GM12878 (cell line): ENCODE measurements at regions of chr7 and their contacts with region 1.

Region 1: DNA sequence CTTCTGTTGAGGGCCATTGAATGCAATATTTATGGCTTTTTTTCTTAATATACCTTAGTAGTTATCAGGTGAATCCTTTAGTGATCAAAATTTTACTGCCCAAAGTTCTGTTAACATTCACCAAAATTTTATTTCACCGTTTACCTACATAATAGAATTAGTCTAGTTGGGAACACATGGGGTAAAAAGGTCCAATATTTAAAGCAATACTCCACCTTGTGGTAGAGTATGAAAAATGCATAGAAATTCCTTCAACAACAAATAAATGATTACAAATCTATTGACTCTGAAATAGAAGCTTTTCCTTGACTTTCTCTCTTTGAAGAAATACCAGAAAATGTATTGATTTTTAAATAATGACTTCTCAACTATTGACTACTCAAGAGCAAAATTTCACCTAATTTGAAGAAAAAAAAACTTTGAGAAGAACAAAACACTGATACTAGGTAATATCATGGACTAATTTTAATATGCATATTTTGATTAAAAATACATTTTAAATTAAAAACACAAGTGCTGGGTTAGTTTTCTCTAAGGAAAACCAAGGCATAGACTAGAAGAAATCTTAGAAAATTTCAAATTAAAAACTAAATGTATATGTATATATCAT is 43.3 kb downstream of the POLR1F start:
- DNase-seq: no peak
- ATAC-seq: peak; percentile 77
- H3K4me3 ChIP-seq: no peak overlapping the region
- H3K27ac ChIP-seq: no peak overlapping the region
- H3K4me1 ChIP-seq: no peaks in the 10 kb centered on the region
- H3K27me3 ChIP-seq: no peaks in the 10 kb centered on the region
- CTCF ChIP-seq: peak; percentile 38 to 68 (median 49); a peak in 3 of 6 replicates
- EP300 ChIP-seq: no peak
- POLR2A ChIP-seq: no peak
- RAD21 ChIP-seq: peak; percentile 64

Region 2: DNA sequence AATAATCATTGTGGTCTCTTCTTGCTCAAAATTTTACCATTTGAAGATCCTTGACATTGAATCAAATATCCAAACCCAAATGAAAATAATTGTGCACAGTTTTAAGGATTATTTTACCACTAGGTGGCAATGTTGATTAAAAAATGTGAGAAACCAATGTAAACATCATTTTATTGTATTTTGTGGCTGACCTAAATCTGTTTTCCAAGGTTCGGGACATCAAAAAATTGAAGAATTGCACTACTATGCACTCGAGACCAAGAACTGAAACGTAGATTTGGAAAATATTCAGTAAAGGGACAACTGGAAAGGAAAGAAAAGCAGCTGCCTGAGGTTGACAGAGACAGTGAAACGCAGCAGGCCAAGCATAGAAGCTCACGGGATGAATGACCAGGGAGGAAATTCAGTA is 1984.6 kb before region 1 on chr7:
- CTCF ChIA-PET with region 1: no interaction called
- POLR2A ChIA-PET with region 1: no interaction called
- RAD21 ChIA-PET with region 1: no interaction called
- SMC1A ChIA-PET with region 1: no interaction called
- in situ Hi-C with region 1: loop called (anchors 25 kb)
- intact Hi-C with region 1: no loop called
- DNase-seq: no peak
- ATAC-seq: peak; percentile 64; the same call in 2 of the 3 replicates
- H3K4me3 ChIP-seq: no peak overlapping the region
- H3K27ac ChIP-seq: no peak overlapping the region
- H3K4me1 ChIP-seq: no peaks in the 10 kb centered on the region
- H3K27me3 ChIP-seq: 0 out of 4 replicates have a peak, but pooled peaks cover 0 to 4% of the 10 kb centered on the region in 2 experiments
- CTCF ChIP-seq: peak in 2 of 3 experiments; percentile 40 to 44; a peak in 4 of 6 replicates
- EP300 ChIP-seq: no peak
- POLR2A ChIP-seq: no peak
- RAD21 ChIP-seq: peak; percentile 45

Region 3: GRCh38 chr7:18590744-18591340 is 1074.7 kb before region 1 on chr7:
- CTCF ChIA-PET with region 1: no interaction called
- POLR2A ChIA-PET with region 1: no interaction called
- RAD21 ChIA-PET with region 1: no interaction called
- SMC1A ChIA-PET with region 1: no interaction called
- in situ Hi-C with region 1: no loop called
- intact Hi-C with region 1: loop called (anchors 10 kb)
- DNase-seq: no peak
- ATAC-seq: peak; percentile 69
- H3K4me3 ChIP-seq: no peak overlapping the region
- H3K27ac ChIP-seq: no peak overlapping the region
- H3K4me1 ChIP-seq: no peaks in the 10 kb centered on the region
- H3K27me3 ChIP-seq: no peaks in the 10 kb centered on the region
- CTCF ChIP-seq: peak; percentile 22 to 39 (median 30); a peak in 3 of 6 replicates
- EP300 ChIP-seq: no peak
- POLR2A ChIP-seq: no peak
- RAD21 ChIP-seq: peak; percentile 53

Region 4: GRCh38 chr7:19117091-19117869 is 548.2 kb before region 1 on chr7 and contains the start of gene TWIST1:
- CTCF ChIA-PET with region 1: interaction called, 3 read pairs
- POLR2A ChIA-PET with region 1: no interaction called
- RAD21 ChIA-PET with region 1: interaction called, 3 read pairs
- SMC1A ChIA-PET with region 1: interaction called, 3 read pairs
- in situ Hi-C with region 1: loop called (anchors 25 kb)
- intact Hi-C with region 1: loop called (anchors 5 kb)
- DNase-seq: no peak
- ATAC-seq: 0 out of 3 replicates have a peak, but pooled peaks have one; percentile 20
- H3K4me3 ChIP-seq: no peak within 1 kb of the TSS
- H3K27ac ChIP-seq: no peak within 1 kb of the TSS
- H3K4me1 ChIP-seq: no peaks in the 10 kb centered on the region
- H3K27me3 ChIP-seq: peaks cover 7 to 21% of the 10 kb centered on the region in 2 experiments
- CTCF ChIP-seq: no peak
- EP300 ChIP-seq: no peak
- POLR2A ChIP-seq: no peak
- RAD21 ChIP-seq: no peak
- polyA plus RNA-seq, gene TWIST1: not detected

Region 5: DNA sequence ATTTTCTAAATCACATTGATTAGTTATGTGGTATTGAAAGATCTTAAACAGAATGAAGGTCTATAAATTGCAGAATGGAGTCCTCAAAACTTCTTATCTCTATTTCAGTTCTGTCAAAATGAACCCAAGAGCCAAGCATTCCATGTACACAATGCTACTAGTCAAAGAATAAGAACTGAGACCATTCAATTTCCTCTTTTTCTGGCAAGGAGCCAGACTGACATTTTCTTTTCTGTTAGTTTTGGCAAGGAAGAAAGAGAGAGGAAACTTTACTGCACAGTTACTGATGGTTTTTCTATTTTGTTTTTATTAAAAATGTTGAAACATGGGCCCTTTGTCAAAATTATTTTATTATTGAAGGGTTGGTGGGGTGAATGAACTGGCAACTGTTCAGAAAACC is 338.5 kb before region 1 on chr7:
- CTCF ChIA-PET with region 1: no interaction called
- POLR2A ChIA-PET with region 1: no interaction called
- RAD21 ChIA-PET with region 1: no interaction called
- SMC1A ChIA-PET with region 1: no interaction called
- in situ Hi-C with region 1: no loop called
- intact Hi-C with region 1: loop called (anchors 10 kb)
- DNase-seq: no peak
- ATAC-seq: no peak
- H3K4me3 ChIP-seq: no peak overlapping the region
- H3K27ac ChIP-seq: no peak overlapping the region
- H3K4me1 ChIP-seq: no peaks in the 10 kb centered on the region
- H3K27me3 ChIP-seq: no peaks in the 10 kb centered on the region
- CTCF ChIP-seq: no peak
- EP300 ChIP-seq: no peak
- POLR2A ChIP-seq: no peak
- RAD21 ChIP-seq: no peak

Region 6: DNA sequence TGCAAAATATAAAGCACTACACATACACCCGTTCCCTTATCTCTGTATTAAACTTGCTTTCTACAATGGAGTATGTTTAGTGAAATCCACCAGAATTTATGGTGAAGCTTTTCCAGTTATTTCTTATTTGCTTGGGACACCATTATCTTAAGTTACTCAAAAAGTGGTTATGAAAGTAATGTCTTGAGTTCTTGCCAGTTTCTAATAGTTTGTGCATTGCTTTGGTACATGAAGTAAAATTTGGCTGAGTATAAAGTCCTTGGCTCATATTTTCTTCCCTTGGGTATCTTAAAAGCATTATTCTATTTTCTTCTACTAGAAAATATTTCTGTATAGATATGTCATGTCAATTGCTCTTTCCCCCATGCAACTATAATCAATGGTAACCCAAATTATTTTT is 41.8 kb before region 1 on chr7:
- CTCF ChIA-PET with region 1: no interaction called
- POLR2A ChIA-PET with region 1: no interaction called
- RAD21 ChIA-PET with region 1: no interaction called
- SMC1A ChIA-PET with region 1: no interaction called
- in situ Hi-C with region 1: no loop called
- intact Hi-C with region 1: no loop called
- DNase-seq: no peak
- ATAC-seq: no peak
- H3K4me3 ChIP-seq: no peak overlapping the region
- H3K27ac ChIP-seq: no peak overlapping the region
- H3K4me1 ChIP-seq: no peaks in the 10 kb centered on the region
- H3K27me3 ChIP-seq: no peaks in the 10 kb centered on the region
- CTCF ChIP-seq: no peak
- EP300 ChIP-seq: no peak
- POLR2A ChIP-seq: no peak
- RAD21 ChIP-seq: no peak